CD4-positive, alpha-beta T cell (primary cell): ENCODE measurements at regions of chr5 and their contacts with region 1.

Region 1: GRCh38 chr5:36507332-36507952 is 99.0 kb upstream of the SLC1A3 start:
- DNase-seq: peak; percentile 48 to 77 (median 60)
- ATAC-seq: peak; percentile 55
- H3K4me3 ChIP-seq: no peak overlapping the region
- H3K4me3 Mint-ChIP-seq: no peak overlapping the region
- H3K27ac ChIP-seq: no peak overlapping the region
- H3K27ac Mint-ChIP-seq: no peak overlapping the region
- H3K4me1 ChIP-seq: no peaks in the 10 kb centered on the region
- H3K4me1 Mint-ChIP-seq: no peaks in the 10 kb centered on the region
- H3K27me3 ChIP-seq: no peaks in the 10 kb centered on the region
- H3K27me3 Mint-ChIP-seq: peaks cover 6% of the 10 kb centered on the region
- CTCF ChIP-seq: peak; percentile 86

Region 2: DNA sequence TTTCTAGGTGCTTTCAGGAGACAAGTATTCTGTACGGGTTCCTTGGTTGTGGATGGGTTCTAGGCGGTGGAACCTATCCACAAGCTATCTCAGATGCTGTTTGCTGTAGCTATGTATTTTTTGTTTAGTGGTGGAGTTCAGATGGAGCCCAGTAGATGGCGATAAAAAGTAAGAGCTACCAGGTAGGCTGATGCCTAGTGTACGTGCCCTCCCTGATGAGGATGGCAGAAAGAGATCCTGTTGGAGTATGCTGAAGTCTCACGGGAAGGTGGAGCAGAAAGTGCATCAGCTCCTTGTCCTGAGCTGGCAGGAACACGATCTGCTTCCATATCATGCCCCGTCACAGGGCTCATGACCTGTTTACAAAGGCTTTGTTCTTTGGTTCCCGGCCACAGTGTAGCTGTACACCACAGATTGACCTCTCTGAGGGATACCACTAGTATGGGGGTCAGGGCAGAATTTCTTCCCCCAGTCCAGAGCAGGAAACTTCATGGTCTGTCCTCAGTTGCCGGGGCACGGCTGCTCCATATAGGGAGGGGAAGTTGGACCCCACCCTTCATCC is 428.2 kb before region 1 on chr5:
- CTCF ChIA-PET with region 1: interaction called, 4 read pairs
- POLR2A ChIA-PET with region 1: no interaction called
- intact Hi-C with region 1: loop called (anchors 2 to 5 kb)
- DNase-seq: peak in 5 of 14 experiments; percentile 6 to 56 (median 38)
- ATAC-seq: peak; percentile 59
- H3K4me3 ChIP-seq: no peak overlapping the region
- H3K4me3 Mint-ChIP-seq: no peak overlapping the region
- H3K27ac ChIP-seq: no peak overlapping the region
- H3K27ac Mint-ChIP-seq: no peak overlapping the region
- H3K4me1 ChIP-seq: peaks cover 5% of the 10 kb centered on the region
- H3K4me1 Mint-ChIP-seq: no peaks in the 10 kb centered on the region
- H3K27me3 ChIP-seq: peaks cover 0 to 13% of the 10 kb centered on the region in 2 experiments
- H3K27me3 Mint-ChIP-seq: peaks cover 33% of the 10 kb centered on the region
- CTCF ChIP-seq: peak; percentile 64

Region 3: DNA sequence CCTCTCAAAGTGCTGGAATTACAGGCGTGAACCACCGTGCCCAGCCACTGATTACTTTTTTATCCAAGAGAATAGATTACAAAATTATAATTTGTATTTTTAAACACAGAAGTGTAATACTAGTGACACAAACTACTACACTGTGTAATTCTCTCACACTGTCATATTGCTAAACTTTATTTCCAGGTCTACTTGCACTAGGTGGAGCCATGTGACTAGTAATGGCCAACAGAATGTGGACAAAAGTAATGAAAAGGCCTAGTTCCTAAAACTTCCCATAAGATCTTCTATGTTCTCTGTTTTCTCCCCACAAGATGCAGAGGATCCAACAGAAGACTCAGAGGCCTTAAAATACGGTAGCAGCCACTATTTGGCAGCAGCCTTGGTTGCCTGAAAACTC is 293.0 kb before region 1 on chr5:
- CTCF ChIA-PET with region 1: no interaction called
- POLR2A ChIA-PET with region 1: no interaction called
- intact Hi-C with region 1: loop called (anchors 5 to 10 kb)
- DNase-seq: peak in 2 of 14 experiments; percentile 9
- ATAC-seq: no peak
- H3K4me3 ChIP-seq: no peak overlapping the region
- H3K4me3 Mint-ChIP-seq: no peak overlapping the region
- H3K27ac ChIP-seq: no peak overlapping the region
- H3K27ac Mint-ChIP-seq: no peak overlapping the region
- H3K4me1 ChIP-seq: no peaks in the 10 kb centered on the region
- H3K4me1 Mint-ChIP-seq: no peaks in the 10 kb centered on the region
- H3K27me3 ChIP-seq: no peaks in the 10 kb centered on the region
- H3K27me3 Mint-ChIP-seq: no peaks in the 10 kb centered on the region
- CTCF ChIP-seq: peak; percentile 35

Region 4: GRCh38 chr5:36273809-36274526 is 233.5 kb before region 1 on chr5:
- CTCF ChIA-PET with region 1: no interaction called
- POLR2A ChIA-PET with region 1: no interaction called
- intact Hi-C with region 1: loop called in 1 of 2 experiments (anchors 5 kb)
- DNase-seq: peak in 2 of 14 experiments; percentile 7 to 10
- ATAC-seq: no peak
- H3K4me3 ChIP-seq: no peak overlapping the region
- H3K4me3 Mint-ChIP-seq: no peak overlapping the region
- H3K27ac ChIP-seq: no peak overlapping the region
- H3K27ac Mint-ChIP-seq: no peak overlapping the region
- H3K4me1 ChIP-seq: no peaks in the 10 kb centered on the region
- H3K4me1 Mint-ChIP-seq: no peaks in the 10 kb centered on the region
- H3K27me3 ChIP-seq: no peaks in the 10 kb centered on the region
- H3K27me3 Mint-ChIP-seq: peaks cover 20% of the 10 kb centered on the region
- CTCF ChIP-seq: no peak

Region 5: GRCh38 chr5:36414869-36415282 is 92.6 kb before region 1 on chr5:
- CTCF ChIA-PET with region 1: no interaction called
- POLR2A ChIA-PET with region 1: no interaction called
- intact Hi-C with region 1: loop called (anchors 2 to 5 kb)
- DNase-seq: peak in 1 of 14 experiments; percentile 7
- ATAC-seq: no peak
- H3K4me3 ChIP-seq: no peak overlapping the region
- H3K4me3 Mint-ChIP-seq: no peak overlapping the region
- H3K27ac ChIP-seq: no peak overlapping the region
- H3K27ac Mint-ChIP-seq: no peak overlapping the region
- H3K4me1 ChIP-seq: no peaks in the 10 kb centered on the region
- H3K4me1 Mint-ChIP-seq: peaks cover 14% of the 10 kb centered on the region
- H3K27me3 ChIP-seq: no peaks in the 10 kb centered on the region
- H3K27me3 Mint-ChIP-seq: peaks cover 5% of the 10 kb centered on the region
- CTCF ChIP-seq: peak; percentile 20

Region 6: GRCh38 chr5:36482812-36483211 is 24.6 kb before region 1 on chr5:
- CTCF ChIA-PET with region 1: no interaction called
- POLR2A ChIA-PET with region 1: no interaction called
- intact Hi-C with region 1: no loop called
- DNase-seq: no peak
- ATAC-seq: no peak
- H3K4me3 ChIP-seq: no peak overlapping the region
- H3K4me3 Mint-ChIP-seq: no peak overlapping the region
- H3K27ac ChIP-seq: no peak overlapping the region
- H3K27ac Mint-ChIP-seq: no peak overlapping the region
- H3K4me1 ChIP-seq: no peaks in the 10 kb centered on the region
- H3K4me1 Mint-ChIP-seq: no peaks in the 10 kb centered on the region
- H3K27me3 ChIP-seq: peaks cover 0 to 2% of the 10 kb centered on the region in 2 experiments
- H3K27me3 Mint-ChIP-seq: no peaks in the 10 kb centered on the region
- CTCF ChIP-seq: no peak